ENCODE measurements at regions of chr11 and their contacts with region 1.

Region 1: GRCh38 chr11:19595840-19596751 is 116.5 kb upstream of the NAV2 start:
- DNase-seq: peak; percentile 89 to 93
- ATAC-seq: peak; percentile 86
- H3K4me3 ChIP-seq: peak overlapping the region in 1 of 2 donors; percentile 8
- H3K27ac ChIP-seq: peak overlapping the region; percentile 94 to 96
- H3K4me1 ChIP-seq: peaks cover 5 to 8% of the 10 kb centered on the region in 2 donors
- H3K27me3 ChIP-seq: no peaks in the 10 kb centered on the region

Region 2: GRCh38 chr11:19499026-19499669 is 96.9 kb before region 1 on chr11:
- intact Hi-C with region 1: no loop called
- DNase-seq: no peak
- ATAC-seq: no peak
- H3K4me3 ChIP-seq: no peak overlapping the region
- H3K27ac ChIP-seq: no peak overlapping the region
- H3K4me1 ChIP-seq: no peaks in the 10 kb centered on the region
- H3K27me3 ChIP-seq: no peaks in the 10 kb centered on the region

Region 3: DNA sequence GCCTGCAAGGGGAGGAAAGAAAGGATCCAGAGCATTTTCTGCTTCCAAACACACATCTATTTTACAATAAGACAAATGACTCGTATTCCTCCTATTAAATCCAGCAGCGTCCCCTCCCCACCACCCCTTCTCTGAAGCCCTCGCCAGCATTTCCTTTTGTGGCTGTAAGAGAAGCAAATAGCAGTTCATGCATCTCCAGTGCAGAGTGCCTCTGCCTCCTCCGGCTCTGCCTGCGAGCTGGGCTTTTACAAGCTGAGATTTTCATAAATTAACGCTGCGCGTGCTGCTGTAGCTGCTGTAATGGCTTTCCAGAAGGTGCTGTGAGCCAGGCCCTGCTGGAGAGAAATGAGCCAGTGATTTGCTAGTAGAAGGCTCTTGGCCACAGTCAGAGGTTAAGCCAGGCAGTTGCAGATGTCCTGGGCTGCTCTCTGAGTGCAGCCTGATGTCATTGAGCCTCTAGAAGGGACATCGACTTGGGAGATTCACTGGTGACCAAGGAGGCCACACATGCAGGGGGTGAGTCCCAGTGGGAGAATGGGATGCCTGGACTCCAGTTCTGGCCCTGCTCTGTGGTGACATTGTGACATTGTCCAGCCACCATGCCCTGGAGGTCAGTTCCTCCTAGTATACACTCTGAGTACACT is 18.0 kb before region 1 on chr11:
- intact Hi-C with region 1: loop called in 1 of 2 experiments (anchors 2 kb)
- DNase-seq: peak; percentile 78 to 81
- ATAC-seq: peak; percentile 90
- H3K4me3 ChIP-seq: no peak overlapping the region
- H3K27ac ChIP-seq: peak overlapping the region; percentile 73 to 100
- H3K4me1 ChIP-seq: peaks cover 17 to 21% of the 10 kb centered on the region in 2 donors
- H3K27me3 ChIP-seq: no peaks in the 10 kb centered on the region

Region 4: DNA sequence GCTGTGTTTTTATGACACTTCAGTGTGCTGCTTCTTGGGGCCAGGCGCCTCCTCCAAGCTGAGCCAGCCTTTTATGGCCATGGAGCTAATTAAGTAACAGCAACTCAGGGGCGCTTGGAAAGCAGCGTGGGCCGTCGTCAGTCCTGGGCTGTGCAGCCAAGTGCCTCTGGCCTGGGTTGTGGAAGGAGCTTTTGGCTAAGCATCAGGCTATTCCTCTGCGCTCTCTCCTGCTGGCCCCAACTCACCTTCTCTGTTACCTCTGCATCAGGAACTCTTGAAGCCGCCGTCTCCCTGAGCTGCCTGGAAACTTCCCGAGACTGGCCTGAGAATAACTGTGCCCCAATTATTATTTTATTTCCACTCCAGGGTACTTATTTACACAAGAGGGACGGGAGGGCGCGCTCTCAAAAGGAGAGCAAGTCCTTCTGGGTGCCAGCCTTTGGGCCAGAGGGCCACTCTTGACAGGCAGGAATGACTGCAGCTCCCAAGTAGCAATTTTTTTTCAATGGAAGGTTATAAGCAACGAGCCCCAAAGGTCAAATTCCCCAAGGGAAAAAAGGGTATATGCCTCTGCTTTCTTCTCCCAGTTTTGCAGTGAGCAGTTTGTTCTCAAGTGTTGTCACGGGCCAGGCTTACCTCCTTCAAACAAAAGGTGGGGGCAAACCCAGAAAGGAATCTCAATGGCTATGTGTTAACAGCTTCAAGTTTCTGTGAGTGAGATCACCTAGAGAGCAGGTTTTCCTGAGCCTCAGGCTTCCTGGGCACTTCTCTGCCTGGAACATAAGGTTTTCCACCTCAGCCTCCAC is 78.0 kb after region 1 on chr11:
- intact Hi-C with region 1: loop called in 1 of 2 experiments (anchors 5 kb)
- DNase-seq: peak; percentile 89 to 93
- ATAC-seq: peak; percentile 86
- H3K4me3 ChIP-seq: no peak overlapping the region
- H3K27ac ChIP-seq: peak overlapping the region; percentile 95 to 98
- H3K4me1 ChIP-seq: peaks cover 0 to 9% of the 10 kb centered on the region in 2 donors
- H3K27me3 ChIP-seq: no peaks in the 10 kb centered on the region

Region 5: DNA sequence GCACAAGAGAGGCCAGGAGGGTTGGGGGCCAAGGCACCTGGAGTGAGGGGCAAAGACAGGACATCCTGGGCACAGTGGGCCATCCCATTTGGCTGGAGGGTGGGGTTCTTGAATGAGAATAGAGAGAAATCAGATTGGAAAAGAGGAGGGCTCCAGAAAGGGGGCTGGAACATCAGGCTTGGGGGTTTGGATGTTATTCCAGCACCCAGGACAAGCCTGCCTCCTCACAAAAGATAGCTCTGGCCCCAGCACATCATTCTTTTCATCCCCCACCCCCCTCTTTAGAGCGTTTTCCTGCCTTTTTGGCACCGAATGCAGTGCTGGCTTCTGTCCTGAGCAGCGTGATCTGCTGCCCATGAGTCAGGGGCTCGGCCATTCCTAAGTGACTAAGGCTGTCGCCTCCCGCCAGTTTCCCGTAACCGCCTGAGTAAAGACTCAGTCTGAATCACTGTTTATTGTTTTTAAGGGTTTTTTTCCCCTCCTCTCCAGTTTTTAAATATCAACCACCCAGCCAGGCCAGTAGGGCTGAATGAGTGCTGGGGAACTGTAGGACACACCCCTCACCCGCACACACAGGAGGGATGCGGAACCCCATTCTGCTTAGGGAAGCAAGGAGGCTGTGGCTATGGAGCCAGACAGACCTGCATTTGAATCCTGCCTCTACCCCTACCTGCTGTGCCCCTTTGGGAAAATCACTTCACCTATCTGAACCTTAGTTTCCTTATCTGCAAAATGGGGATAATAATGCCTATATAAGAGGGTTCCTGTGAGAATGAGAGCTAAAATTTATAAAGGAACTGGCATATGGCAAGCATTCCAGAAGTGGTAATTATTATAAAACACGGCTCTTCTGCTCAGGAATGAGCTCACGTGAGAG is 84.1 kb after region 1 on chr11:
- intact Hi-C with region 1: loop called in 1 of 2 experiments (anchors 5 kb)
- DNase-seq: peak; percentile 95 to 98
- ATAC-seq: peak; percentile 90
- H3K4me3 ChIP-seq: no peak overlapping the region
- H3K27ac ChIP-seq: peak overlapping the region; percentile 6 to 99
- H3K4me1 ChIP-seq: peaks cover 5 to 7% of the 10 kb centered on the region in 2 donors
- H3K27me3 ChIP-seq: no peaks in the 10 kb centered on the region

Region 6: DNA sequence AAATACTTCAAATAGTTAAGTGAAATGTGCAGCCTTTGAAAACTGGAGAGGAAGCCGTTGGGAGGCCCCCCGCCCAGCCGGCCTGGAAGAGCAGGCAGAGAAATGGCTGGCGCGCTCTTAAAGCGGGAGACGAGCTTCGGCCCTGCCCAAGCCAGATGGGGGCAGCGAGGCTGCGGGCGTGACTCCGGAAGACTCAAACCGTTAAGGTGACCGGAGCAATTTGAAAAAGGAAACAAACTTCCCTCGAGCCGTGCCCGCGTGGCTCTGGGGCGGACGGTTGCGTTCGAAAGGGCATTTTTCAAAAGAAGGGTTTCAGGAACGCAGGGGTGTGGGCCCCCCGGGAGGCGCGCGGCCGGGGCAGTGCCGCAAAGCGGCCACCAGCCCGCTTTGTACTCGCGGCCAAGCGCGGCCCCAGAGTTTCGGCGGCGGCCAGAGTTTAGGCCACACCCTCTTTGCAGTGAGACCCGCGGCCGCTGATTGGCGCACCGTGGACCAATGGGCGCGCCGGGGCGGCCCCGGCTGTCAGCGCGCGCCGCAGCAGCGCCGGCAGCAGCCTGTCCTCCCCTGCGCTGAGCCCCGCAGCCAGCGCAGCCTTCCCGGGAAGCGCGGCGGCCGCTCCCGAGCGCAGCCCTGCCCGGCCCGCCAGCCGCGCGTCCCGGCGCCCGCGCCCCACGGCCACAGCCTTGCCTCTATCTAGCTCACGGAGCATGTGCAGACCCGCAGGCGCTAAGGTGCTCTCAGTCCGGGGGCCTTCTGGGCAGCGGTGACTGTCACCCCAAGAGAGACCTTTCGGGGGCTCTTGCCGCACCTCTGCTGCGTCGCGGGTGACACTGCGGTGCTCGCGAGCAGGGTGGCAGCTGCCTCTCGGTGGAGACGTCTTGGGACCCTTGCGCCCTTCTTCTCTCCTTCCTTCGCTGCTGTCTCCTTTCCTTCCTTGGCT is 116.5 kb after region 1 on chr11 and contains the start of gene NAV2:
- intact Hi-C with region 1: loop called (anchors 2 to 5 kb)
- DNase-seq: peak; percentile 96
- ATAC-seq: peak; percentile 95
- H3K4me3 ChIP-seq: peak within 1 kb of the TSS; percentile 73 to 82
- H3K27ac ChIP-seq: peak within 1 kb of the TSS; percentile 73 to 96
- H3K4me1 ChIP-seq: peaks cover 0 to 4% of the 10 kb centered on the region in 2 donors
- H3K27me3 ChIP-seq: no peaks in the 10 kb centered on the region
- total RNA-seq, gene NAV2: 84.6 to 250 TPM

Measured in aorta (tissue), 5 donors.